PC-9 (cell line): ENCODE measurements at regions of chr7 and their contacts with region 1.

Region 1: DNA sequence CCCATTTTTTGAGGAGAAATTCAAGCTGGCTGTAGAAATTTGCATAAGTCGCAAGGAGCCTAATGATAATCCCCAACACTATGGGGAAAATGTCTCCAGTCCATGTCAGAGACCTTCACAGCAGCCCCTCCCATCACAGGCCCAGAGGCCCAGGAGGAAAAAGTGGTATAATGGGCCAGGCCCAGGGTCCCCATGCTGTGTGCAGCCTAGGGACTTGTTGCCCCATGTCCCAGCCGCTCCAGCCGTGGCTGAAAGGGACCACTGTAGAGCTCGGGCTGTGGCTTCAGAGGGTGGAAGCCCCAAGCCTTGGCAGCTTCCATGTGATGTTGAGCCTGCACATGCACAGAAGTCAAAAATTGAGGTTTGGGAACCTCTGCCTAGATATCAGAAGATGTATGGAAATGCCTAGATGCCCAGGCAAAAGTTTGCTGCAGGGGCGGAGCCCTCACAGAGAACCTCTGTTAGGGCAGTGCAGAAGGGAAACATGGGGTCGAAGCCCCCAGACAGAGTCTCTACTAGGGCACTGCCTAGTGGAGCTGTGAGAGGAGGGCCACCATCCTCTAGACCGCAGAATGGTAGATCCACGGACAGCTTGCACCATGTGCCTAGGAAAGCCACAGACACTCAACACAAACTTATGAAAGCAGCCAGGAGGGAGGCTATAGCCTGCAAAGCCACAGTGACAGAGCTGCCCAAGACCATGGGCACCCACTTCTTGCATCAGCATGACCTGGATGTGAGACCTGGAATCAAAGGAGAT is 35.4 kb upstream of the KMT2C start:
- DNase-seq: no peak
- H3K4me3 ChIP-seq: no peak overlapping the region
- H3K27ac ChIP-seq: no peak overlapping the region
- H3K4me1 ChIP-seq: no peaks in the 10 kb centered on the region
- H3K27me3 ChIP-seq: no peaks in the 10 kb centered on the region
- CTCF ChIP-seq: no peak

Region 2: DNA sequence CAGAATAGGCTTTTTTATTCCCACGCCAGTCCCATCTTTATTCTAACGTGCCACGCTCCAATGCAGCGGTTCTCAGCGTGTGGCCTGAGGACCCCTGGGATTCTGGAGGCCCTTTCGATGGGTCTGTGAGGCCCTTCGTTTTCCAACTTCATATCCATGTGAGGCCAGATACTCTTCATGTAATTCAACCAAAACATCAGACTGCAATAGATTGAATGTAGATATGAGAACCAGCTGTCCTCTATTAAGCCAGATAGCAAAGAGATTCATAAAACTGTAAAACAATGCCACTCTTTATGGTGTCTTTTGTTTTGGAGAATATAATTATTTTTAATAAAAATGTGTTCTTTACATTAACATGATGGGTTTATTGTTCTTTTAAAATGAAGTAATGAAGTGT is 17.8 kb after region 1 on chr7:
- CTCF ChIA-PET with region 1: interaction called, 10 read pairs
- POLR2A ChIA-PET with region 1: no interaction called
- intact Hi-C with region 1: no loop called
- DNase-seq: no peak
- H3K4me3 ChIP-seq: no peak overlapping the region
- H3K27ac ChIP-seq: no peak overlapping the region
- H3K4me1 ChIP-seq: no peaks in the 10 kb centered on the region
- H3K27me3 ChIP-seq: no peaks in the 10 kb centered on the region
- CTCF ChIP-seq: no peak